ENCODE measurements at regions of chr18 and their contacts with region 1.

Region 1: GRCh38 chr18:47283476-47283875 is 32.0 kb upstream of the SKOR2 start:
- DNase-seq: peak; percentile 39
- ATAC-seq: peak; percentile 90
- H3K4me3 ChIP-seq: no peak overlapping the region
- H3K27ac ChIP-seq: no peak overlapping the region
- H3K4me1 ChIP-seq: peaks cover 5% of the 10 kb centered on the region; the same call in 1 of the 2 replicates
- H3K27me3 ChIP-seq: no peaks in the 10 kb centered on the region; a peak in 1 of 5 replicates
- CTCF ChIP-seq: peak; percentile 63
- EP300 ChIP-seq: no peak
- POLR2A ChIP-seq: no peak
- RAD21 ChIP-seq: peak; percentile 28; the same call in 1 of the 2 replicates

Region 2: GRCh38 chr18:47215554-47216138 is 67.8 kb before region 1 on chr18:
- CTCF ChIA-PET with region 1: interaction called, 8 read pairs
- POLR2A ChIA-PET with region 1: no interaction called
- in situ Hi-C with region 1: no loop called
- intact Hi-C with region 1: loop called (anchors 1 kb)
- DNase-seq: peak; percentile 44
- ATAC-seq: peak; percentile 69
- H3K4me3 ChIP-seq: no peak overlapping the region
- H3K27ac ChIP-seq: no peak overlapping the region
- H3K4me1 ChIP-seq: no peaks in the 10 kb centered on the region
- H3K27me3 ChIP-seq: peaks cover 0 to 3% of the 10 kb centered on the region in 2 experiments; a peak in 2 of 5 replicates
- CTCF ChIP-seq: peak; percentile 74
- EP300 ChIP-seq: no peak
- POLR2A ChIP-seq: no peak
- RAD21 ChIP-seq: peak; percentile 56

Measured in HepG2 (cell line).